Mammary epithelial cell (primary cell): ENCODE measurements at regions of chr17 and their contacts with region 1.

Region 1: DNA sequence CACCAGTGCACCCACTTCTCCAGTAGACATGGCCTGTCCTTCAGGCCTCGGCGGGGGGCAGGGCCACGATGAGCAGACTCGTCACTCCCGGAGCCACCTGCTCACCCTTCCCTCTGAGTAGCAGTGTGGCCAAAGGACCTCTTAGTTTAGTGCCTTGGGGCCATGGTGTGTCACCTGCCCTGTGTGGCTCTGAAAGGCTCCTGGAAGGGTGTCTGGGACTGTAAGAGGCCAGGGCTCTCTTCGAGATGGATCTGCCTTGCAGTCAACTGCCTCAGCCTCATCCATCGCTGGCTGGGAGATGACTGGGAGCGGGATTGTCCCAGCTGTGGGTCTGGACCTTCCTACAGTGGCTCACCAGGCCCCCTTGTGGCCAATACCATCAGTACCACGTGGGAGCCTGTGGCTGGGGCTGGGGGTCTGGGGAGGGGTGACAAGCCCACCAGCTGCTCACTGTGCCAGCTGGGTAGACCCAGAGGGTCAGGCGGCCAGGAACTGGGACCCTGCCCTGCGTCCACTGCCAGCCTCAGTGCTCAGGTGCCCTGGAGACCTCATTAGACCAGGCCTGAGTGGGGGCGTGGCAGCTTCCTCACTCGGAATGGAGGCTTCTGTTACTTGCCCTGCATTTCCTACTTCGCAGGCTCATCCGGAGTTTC is 133.4 kb downstream of the OR1D5 start:
- DNase-seq: peak; percentile 24
- H3K4me3 ChIP-seq: no peak overlapping the region
- H3K27ac ChIP-seq: no peak overlapping the region
- H3K4me1 ChIP-seq: peaks cover 24% of the 10 kb centered on the region
- H3K27me3 ChIP-seq: no peaks in the 10 kb centered on the region
- CTCF ChIP-seq: peak; percentile 34 to 76

Region 2: GRCh38 chr17:2647957-2648356 is 282.1 kb before region 1 on chr17:
- CTCF ChIA-PET with region 1: no interaction called
- dilution Hi-C with region 1: no loop called
- in situ Hi-C with region 1: no loop called
- intact Hi-C with region 1: no loop called
- DNase-seq: no peak
- H3K4me3 ChIP-seq: no peak overlapping the region
- H3K27ac ChIP-seq: no peak overlapping the region
- H3K4me1 ChIP-seq: peaks cover 4% of the 10 kb centered on the region
- H3K27me3 ChIP-seq: no peaks in the 10 kb centered on the region
- CTCF ChIP-seq: no peak

Region 3: DNA sequence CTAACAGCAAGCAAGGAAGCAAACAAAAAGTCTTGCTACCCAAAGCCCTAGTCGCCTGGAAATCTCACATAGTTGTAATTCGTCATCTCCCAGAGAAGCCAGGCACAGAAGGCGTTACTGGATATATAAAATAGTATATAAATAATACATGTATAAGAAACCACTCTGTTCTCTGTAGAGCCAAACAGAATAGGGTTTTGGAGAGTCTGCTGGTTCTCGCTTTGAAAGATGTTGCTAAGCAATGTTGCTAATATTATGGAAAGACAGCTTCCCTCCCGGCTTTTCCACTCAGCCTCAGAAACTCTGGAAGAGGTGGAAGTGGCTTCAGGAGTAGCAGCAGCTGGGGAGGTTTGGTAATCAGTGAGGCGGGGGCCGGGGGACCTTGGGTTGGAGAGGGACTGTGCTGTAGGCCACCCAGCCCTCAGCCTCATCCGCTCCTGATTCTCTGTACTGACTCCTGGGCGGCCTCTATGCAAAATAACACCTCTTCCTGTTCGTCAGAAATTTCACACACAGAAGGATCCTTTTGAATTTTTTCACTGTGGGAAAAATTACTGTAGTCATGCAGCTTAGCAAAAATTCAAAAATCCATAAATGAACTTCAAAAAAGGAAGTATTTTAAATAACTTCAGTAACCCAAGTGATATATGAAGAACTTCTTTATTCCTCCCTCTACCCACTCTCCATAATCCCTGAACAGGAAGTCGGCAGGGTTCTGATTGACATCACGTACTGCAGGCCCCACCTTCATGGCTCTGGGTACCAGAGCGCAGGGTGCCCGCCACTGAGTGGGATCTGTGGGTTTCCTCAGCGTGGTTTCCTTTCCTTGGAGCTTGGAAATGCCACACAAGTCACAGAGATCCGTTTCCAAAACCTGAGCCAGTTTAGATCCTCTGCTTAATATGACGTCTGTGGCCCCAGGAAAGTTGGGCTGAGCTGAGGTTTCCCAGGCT is 82.3 kb before region 1 on chr17:
- CTCF ChIA-PET with region 1: interaction called, 12 read pairs
- dilution Hi-C with region 1: loop called (anchors 5 kb)
- in situ Hi-C with region 1: loop called (anchors 5 to 10 kb)
- intact Hi-C with region 1: loop called (anchors 1 kb)
- DNase-seq: no peak
- H3K4me3 ChIP-seq: no peak overlapping the region
- H3K27ac ChIP-seq: no peak overlapping the region
- H3K4me1 ChIP-seq: peaks cover 4% of the 10 kb centered on the region
- H3K27me3 ChIP-seq: no peaks in the 10 kb centered on the region
- CTCF ChIP-seq: no peak

Region 4: GRCh38 chr17:2853111-2853721 is 76.8 kb before region 1 on chr17:
- CTCF ChIA-PET with region 1: interaction called, 12 read pairs
- dilution Hi-C with region 1: loop called (anchors 5 kb)
- in situ Hi-C with region 1: loop called (anchors 5 to 10 kb)
- intact Hi-C with region 1: loop called (anchors 1 kb)
- DNase-seq: peak; percentile 60
- H3K4me3 ChIP-seq: peak overlapping the region; percentile 58 to 90 (median 83)
- H3K27ac ChIP-seq: peak overlapping the region; percentile 35
- H3K4me1 ChIP-seq: peaks cover 17% of the 10 kb centered on the region
- H3K27me3 ChIP-seq: no peaks in the 10 kb centered on the region
- CTCF ChIP-seq: no peak

Region 5: GRCh38 chr17:2867441-2868424 is 62.3 kb before region 1 on chr17:
- CTCF ChIA-PET with region 1: no interaction called
- dilution Hi-C with region 1: no loop called
- in situ Hi-C with region 1: no loop called
- intact Hi-C with region 1: no loop called
- DNase-seq: peak; percentile 29
- H3K4me3 ChIP-seq: no peak overlapping the region
- H3K27ac ChIP-seq: no peak overlapping the region
- H3K4me1 ChIP-seq: peaks cover 9% of the 10 kb centered on the region
- H3K27me3 ChIP-seq: no peaks in the 10 kb centered on the region
- CTCF ChIP-seq: no peak

Region 6: GRCh38 chr17:2892305-2892971 is 37.6 kb before region 1 on chr17:
- CTCF ChIA-PET with region 1: no interaction called
- dilution Hi-C with region 1: no loop called
- in situ Hi-C with region 1: no loop called
- intact Hi-C with region 1: loop called (anchors 1 kb)
- DNase-seq: peak; percentile 98
- H3K4me3 ChIP-seq: no peak overlapping the region
- H3K27ac ChIP-seq: peak overlapping the region; percentile 72
- H3K4me1 ChIP-seq: peaks cover 31% of the 10 kb centered on the region
- H3K27me3 ChIP-seq: no peaks in the 10 kb centered on the region
- CTCF ChIP-seq: no peak

Region 7: DNA sequence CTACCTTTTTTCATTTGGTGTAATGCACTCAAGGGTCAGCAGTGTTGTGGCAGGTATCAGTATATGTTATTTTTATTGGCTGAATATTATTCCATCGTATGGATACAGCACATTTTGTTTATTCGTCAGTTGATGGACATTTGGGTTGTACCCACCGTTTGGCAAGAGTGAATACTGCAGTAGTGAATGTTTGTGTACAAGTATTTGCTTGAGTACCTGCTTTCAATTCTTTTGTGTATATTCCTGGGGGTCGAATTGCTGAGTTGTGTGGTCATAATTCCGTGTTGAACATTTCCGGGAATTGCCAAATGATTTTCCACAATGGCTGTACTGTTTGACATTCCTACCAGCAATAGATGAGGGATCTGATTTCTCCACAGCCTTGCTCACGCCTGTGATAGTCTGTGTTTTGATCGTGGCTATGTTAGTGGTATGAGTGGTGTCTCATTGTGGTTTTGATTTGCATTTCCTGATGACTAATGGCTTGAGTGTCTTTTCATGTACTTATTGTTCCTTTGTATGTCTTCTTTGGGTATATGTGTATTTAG is 25.0 kb after region 1 on chr17:
- CTCF ChIA-PET with region 1: no interaction called
- dilution Hi-C with region 1: no loop called
- in situ Hi-C with region 1: no loop called
- intact Hi-C with region 1: loop called (anchors 1 kb)
- DNase-seq: peak; percentile 98
- H3K4me3 ChIP-seq: peak overlapping the region in 2 of 3 experiments; percentile 5 to 25
- H3K27ac ChIP-seq: peak overlapping the region; percentile 77
- H3K4me1 ChIP-seq: peaks cover 48% of the 10 kb centered on the region
- H3K27me3 ChIP-seq: no peaks in the 10 kb centered on the region
- CTCF ChIP-seq: no peak

Region 8: GRCh38 chr17:2965563-2966235 is 35.7 kb after region 1 on chr17:
- CTCF ChIA-PET with region 1: no interaction called
- dilution Hi-C with region 1: no loop called
- in situ Hi-C with region 1: no loop called
- intact Hi-C with region 1: no loop called
- DNase-seq: peak; percentile 48
- H3K4me3 ChIP-seq: no peak overlapping the region
- H3K27ac ChIP-seq: peak overlapping the region; percentile 14
- H3K4me1 ChIP-seq: peaks cover 18% of the 10 kb centered on the region
- H3K27me3 ChIP-seq: no peaks in the 10 kb centered on the region
- CTCF ChIP-seq: no peak

Region 9: DNA sequence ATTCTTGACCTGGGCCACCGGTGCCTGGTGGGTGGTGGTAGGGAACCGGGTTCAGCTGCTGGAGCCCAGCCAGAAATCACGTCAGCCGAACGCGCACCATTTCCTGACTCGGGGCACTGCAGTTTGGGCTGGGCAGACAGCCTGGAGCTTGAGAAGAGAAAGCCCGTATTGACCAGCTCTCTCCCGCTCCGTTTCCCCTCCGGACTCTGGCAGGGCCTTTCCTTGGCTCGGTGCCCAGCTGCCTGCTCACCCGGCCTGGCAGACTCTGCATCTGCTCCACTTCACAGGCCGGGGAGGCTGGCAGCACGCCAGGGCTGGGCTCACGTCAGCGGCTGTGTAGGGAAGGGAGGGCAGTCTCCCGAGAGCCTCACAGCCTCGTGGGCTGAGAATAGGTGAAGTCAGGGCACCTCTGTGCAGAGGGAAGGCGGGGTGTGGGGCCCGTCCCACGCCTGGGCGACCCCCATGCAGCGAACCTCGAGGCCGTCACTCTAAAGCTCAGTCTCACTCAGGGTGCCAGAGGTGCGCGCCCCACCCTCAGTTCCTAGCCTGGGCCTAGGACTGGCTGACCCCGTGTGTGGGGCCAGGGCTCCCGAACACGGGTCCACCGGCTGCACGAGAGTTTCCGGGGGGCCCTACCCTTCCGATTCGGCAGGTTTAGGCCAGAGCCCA is 74.3 kb after region 1 on chr17:
- CTCF ChIA-PET with region 1: no interaction called
- dilution Hi-C with region 1: no loop called
- in situ Hi-C with region 1: no loop called
- intact Hi-C with region 1: loop called (anchors 1 kb)
- DNase-seq: peak; percentile 93
- H3K4me3 ChIP-seq: no peak overlapping the region
- H3K27ac ChIP-seq: peak overlapping the region; percentile 28
- H3K4me1 ChIP-seq: peaks cover 16% of the 10 kb centered on the region
- H3K27me3 ChIP-seq: no peaks in the 10 kb centered on the region
- CTCF ChIP-seq: no peak

Region 10: GRCh38 chr17:3012926-3013581 is 83.0 kb after region 1 on chr17:
- CTCF ChIA-PET with region 1: interaction called, 3 read pairs
- dilution Hi-C with region 1: loop called (anchors 5 kb)
- in situ Hi-C with region 1: no loop called
- intact Hi-C with region 1: loop called (anchors 2 kb)
- DNase-seq: peak; percentile 26
- H3K4me3 ChIP-seq: no peak overlapping the region
- H3K27ac ChIP-seq: no peak overlapping the region
- H3K4me1 ChIP-seq: no peaks in the 10 kb centered on the region
- H3K27me3 ChIP-seq: no peaks in the 10 kb centered on the region
- CTCF ChIP-seq: peak; percentile 63 to 64